HepG2 (cell line): ENCODE measurements at regions of chr14 and their contacts with region 1.

Region 1: GRCh38 chr14:24734878-24735500 is 101.0 kb upstream of the GZMB start:
- DNase-seq: peak; percentile 86
- ATAC-seq: peak; percentile 95
- H3K4me3 ChIP-seq: no peak overlapping the region
- H3K27ac ChIP-seq: no peak overlapping the region
- H3K4me1 ChIP-seq: no peaks in the 10 kb centered on the region
- H3K27me3 ChIP-seq: no peaks in the 10 kb centered on the region
- CTCF ChIP-seq: peak; percentile 91
- EP300 ChIP-seq: no peak
- POLR2A ChIP-seq: no peak
- RAD21 ChIP-seq: peak; percentile 88

Region 2: GRCh38 chr14:24806061-24806678 is 71.2 kb after region 1 on chr14:
- CTCF ChIA-PET with region 1: interaction called, 5 read pairs
- POLR2A ChIA-PET with region 1: no interaction called
- in situ Hi-C with region 1: no loop called
- intact Hi-C with region 1: loop called (anchors 1 kb)
- DNase-seq: peak; percentile 88
- ATAC-seq: peak; percentile 81
- H3K4me3 ChIP-seq: no peak overlapping the region
- H3K27ac ChIP-seq: no peak overlapping the region
- H3K4me1 ChIP-seq: peaks cover 58% of the 10 kb centered on the region
- H3K27me3 ChIP-seq: no peaks in the 10 kb centered on the region
- CTCF ChIP-seq: peak; percentile 99
- EP300 ChIP-seq: no peak
- POLR2A ChIP-seq: no peak
- RAD21 ChIP-seq: peak; percentile 99

Region 3: DNA sequence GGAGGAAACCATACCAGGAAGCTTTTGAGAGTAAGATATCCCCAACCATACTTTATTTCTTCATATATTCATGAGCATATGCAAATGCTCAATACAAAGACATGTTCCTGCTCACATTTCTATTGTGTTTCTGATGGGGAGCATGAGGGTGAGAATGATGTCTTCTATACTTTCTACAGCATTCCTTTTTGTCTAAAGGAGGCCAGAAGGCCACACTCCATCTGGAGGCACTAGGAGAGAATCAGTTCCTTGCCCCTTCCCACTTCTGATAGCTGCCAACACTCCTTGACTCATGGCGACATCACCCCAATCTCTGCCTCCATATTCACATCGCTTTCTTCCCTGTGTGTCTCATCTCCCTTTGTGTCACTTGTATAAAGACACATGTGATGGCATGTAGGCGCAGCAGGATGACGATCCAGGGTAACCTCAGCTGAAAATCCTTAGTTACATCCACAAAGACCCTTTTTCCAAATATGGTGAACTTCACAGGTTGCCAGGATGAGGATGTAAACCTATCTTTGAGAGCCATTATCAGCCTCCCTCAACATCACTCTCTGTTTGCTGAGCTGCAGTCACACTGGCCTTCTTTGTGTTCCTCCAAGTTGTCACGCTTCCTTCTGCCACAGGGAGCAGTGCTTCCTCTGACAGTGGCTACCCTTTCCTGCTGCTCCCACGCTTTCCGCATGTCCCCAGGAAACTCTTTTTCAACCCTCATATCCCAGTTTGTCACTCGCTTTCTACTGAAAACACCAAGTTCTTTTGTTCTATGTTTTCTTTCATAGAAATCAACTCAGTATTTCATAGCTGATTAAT is 218.1 kb after region 1 on chr14:
- CTCF ChIA-PET with region 1: no interaction called
- POLR2A ChIA-PET with region 1: no interaction called
- in situ Hi-C with region 1: no loop called
- intact Hi-C with region 1: loop called (anchors 5 kb)
- DNase-seq: peak; percentile 81
- ATAC-seq: peak; percentile 99
- H3K4me3 ChIP-seq: no peak overlapping the region
- H3K27ac ChIP-seq: no peak overlapping the region
- H3K4me1 ChIP-seq: peaks cover 15% of the 10 kb centered on the region; the same call in 1 of the 2 replicates
- H3K27me3 ChIP-seq: no peaks in the 10 kb centered on the region
- CTCF ChIP-seq: peak; percentile 67
- EP300 ChIP-seq: no peak
- POLR2A ChIP-seq: no peak
- RAD21 ChIP-seq: peak; percentile 72; the same call in 1 of the 2 replicates

Region 4: DNA sequence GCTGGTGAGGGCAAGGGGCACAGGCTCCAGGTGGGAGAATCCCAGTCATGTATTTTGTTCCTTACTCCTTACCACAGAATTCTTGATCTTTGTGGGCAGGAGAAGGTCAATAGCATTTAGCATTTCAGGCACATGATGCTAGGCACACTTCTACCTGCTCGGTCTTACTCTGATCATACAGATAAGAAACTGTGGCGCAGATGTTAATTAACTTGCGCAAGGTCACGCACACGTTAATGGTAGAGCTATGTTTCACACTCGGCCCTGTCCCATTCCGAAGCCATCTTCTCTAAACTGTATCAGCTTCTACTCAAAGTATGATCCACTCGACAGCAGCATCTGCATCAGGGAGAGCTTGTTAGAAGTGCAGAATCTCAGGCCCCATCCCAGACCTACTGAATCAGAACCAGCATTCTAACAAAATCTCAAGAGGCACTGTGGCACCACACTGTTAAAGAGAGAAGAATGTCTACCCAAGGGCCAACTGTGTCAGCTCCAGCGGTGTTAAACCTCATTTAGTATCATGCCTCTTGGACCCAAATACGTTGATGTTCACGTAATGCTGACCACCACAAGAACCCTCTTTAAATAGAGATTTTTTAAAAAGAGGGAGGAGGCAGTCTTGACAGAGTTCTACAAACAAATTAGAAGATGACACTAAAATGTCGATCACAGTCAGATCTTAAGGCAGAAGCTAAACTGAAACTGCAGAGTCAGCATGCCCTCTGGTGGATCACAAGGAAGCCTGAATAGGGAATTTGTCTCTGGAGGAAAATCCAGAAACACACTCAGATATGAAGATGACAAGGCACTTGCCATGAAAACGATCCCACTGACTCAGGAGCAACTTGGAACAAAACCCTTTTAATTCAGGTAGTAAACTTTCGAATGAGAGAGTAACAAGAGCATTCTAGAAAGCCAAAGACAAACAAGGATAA is 307.6 kb after region 1 on chr14:
- CTCF ChIA-PET with region 1: interaction called, 13 read pairs
- POLR2A ChIA-PET with region 1: no interaction called
- in situ Hi-C with region 1: loop called (anchors 5 kb)
- intact Hi-C with region 1: loop called (anchors 1 kb)
- DNase-seq: peak; percentile 75
- ATAC-seq: peak; percentile 63
- H3K4me3 ChIP-seq: no peak overlapping the region
- H3K27ac ChIP-seq: no peak overlapping the region
- H3K4me1 ChIP-seq: peaks cover 41% of the 10 kb centered on the region
- H3K27me3 ChIP-seq: no peaks in the 10 kb centered on the region
- CTCF ChIP-seq: peak; percentile 89
- EP300 ChIP-seq: no peak
- POLR2A ChIP-seq: no peak
- RAD21 ChIP-seq: peak; percentile 86

Region 5: DNA sequence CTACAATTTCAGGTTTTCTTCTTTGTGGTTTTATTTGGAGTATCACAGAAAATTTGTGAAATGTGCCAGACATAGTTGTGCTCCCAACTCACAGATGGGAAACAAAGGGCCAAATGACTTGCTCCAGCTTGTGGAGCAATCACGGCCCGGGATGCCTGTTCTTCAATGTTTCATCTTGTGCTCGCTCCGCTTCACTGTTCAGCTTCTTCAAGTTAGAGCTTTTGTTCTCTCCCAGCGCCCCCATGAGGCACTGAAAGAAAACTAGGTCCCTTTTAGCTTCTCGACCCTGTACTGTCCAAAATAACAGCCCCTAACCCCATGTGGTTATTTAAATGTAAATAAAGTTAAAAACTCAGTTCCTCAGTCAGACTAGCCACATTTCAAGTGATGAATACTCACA is 502.9 kb after region 1 on chr14:
- CTCF ChIA-PET with region 1: interaction called, 5 read pairs
- POLR2A ChIA-PET with region 1: no interaction called
- in situ Hi-C with region 1: no loop called
- intact Hi-C with region 1: loop called (anchors 1 kb)
- DNase-seq: peak; percentile 59
- ATAC-seq: peak; percentile 96
- H3K4me3 ChIP-seq: no peak overlapping the region
- H3K27ac ChIP-seq: no peak overlapping the region
- H3K4me1 ChIP-seq: no peaks in the 10 kb centered on the region
- H3K27me3 ChIP-seq: no peaks in the 10 kb centered on the region
- CTCF ChIP-seq: peak; percentile 75
- EP300 ChIP-seq: no peak
- POLR2A ChIP-seq: no peak
- RAD21 ChIP-seq: no peak; the same call in 1 of the 2 replicates

Region 6: GRCh38 chr14:25406818-25407217 is 671.8 kb after region 1 on chr14:
- CTCF ChIA-PET with region 1: no interaction called
- POLR2A ChIA-PET with region 1: no interaction called
- in situ Hi-C with region 1: no loop called
- intact Hi-C with region 1: loop called (anchors 1 kb)
- DNase-seq: peak; percentile 68
- ATAC-seq: peak; percentile 87
- H3K4me3 ChIP-seq: no peak overlapping the region
- H3K27ac ChIP-seq: no peak overlapping the region
- H3K4me1 ChIP-seq: no peaks in the 10 kb centered on the region
- H3K27me3 ChIP-seq: no peaks in the 10 kb centered on the region; a peak in 1 of 5 replicates
- CTCF ChIP-seq: peak; percentile 70
- EP300 ChIP-seq: no peak
- POLR2A ChIP-seq: no peak
- RAD21 ChIP-seq: peak; percentile 33; the same call in 1 of the 2 replicates